Right ventricle myocardium inferior (tissue), 1 donor: ENCODE measurements at regions of chr10 and their contacts with region 1.

Region 1: GRCh38 chr10:59625721-59626522 is 83.7 kb downstream of the SLC16A9 start:
- DNase-seq: no peak
- ATAC-seq: peak; percentile 70

Region 2: GRCh38 chr10:58952747-58953466 is 673.0 kb before region 1 on chr10:
- intact Hi-C with region 1: loop called (anchors 5 kb)
- DNase-seq: no peak
- ATAC-seq: peak; percentile 72

Region 3: GRCh38 chr10:59808896-59809643 is 183.1 kb after region 1 on chr10:
- intact Hi-C with region 1: loop called (anchors 5 kb)
- DNase-seq: peak; percentile 84
- ATAC-seq: peak; percentile 69

Region 4: DNA sequence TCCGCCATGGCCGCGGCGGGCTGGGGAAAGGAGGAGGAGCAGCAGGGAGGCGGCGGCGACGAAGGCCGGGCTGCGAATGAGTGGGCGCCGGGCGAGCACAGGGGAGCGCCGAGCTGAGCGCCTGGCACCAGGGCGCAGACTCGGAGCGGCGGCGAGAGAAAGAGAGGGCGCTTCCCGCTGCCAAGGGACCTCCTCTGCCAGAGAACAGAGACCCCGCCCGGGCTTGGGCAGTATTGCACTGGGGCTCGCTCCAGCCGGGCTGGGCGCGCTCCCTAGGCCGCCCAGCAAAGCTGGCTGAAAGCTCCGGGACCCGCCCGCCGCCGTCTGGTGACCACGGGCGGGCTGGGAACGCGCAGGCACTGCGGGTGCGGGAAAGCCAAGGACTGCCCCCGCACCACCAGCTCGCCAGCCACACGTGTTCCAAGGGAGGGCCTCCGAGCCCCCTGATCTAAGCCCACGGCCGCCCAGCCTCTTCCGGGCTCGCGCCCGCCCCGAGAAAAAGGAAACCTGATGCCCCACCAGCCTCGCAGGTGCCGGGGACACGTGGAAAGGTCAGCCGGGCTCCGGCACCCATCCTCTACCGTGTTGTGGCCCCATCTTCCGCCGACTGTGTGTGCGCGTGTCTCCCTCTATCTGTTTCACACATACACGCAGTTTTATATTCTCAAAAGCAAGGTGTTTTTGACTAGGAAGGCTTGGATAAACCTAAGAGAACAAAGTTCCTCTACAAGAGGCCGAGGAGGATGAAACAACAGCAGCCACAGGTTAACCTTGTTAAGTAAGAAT is 280.7 kb after region 1 on chr10 and contains the start of gene CCDC6:
- intact Hi-C with region 1: loop called (anchors 5 kb)
- DNase-seq: peak; percentile 95
- ATAC-seq: peak; percentile 96
- total RNA-seq, gene CCDC6: 16.2 TPM